ENCODE measurements at regions of chr1 and their contacts with region 1.

Region 1: GRCh38 chr1:77978969-77979876 is at the start of gene FUBP1:
- DNase-seq: peak; percentile 99
- H3K4me3 Mint-ChIP-seq: no peak within 1 kb of the TSS
- H3K27ac Mint-ChIP-seq: no peak within 1 kb of the TSS
- H3K4me1 Mint-ChIP-seq: peaks cover 23% of the 10 kb centered on the region
- H3K27me3 Mint-ChIP-seq: no peaks in the 10 kb centered on the region
- CTCF ChIP-seq: peak; percentile 68
- total RNA-seq, gene FUBP1: 156 and 169 TPM in 2 replicates

Region 2: GRCh38 chr1:77759071-77760028 is 219.9 kb before region 1 on chr1 and contains the start of gene USP33:
- CTCF ChIA-PET with region 1: no interaction called
- POLR2A ChIA-PET with region 1: interaction called, 29 read pairs
- intact Hi-C with region 1: loop called (anchors 5 kb)
- DNase-seq: peak; percentile 84
- H3K4me3 Mint-ChIP-seq: peak within 1 kb of the TSS; percentile 91
- H3K27ac Mint-ChIP-seq: peak within 1 kb of the TSS; percentile 91
- H3K4me1 Mint-ChIP-seq: peaks cover 31% of the 10 kb centered on the region
- H3K27me3 Mint-ChIP-seq: no peaks in the 10 kb centered on the region
- CTCF ChIP-seq: no peak
- total RNA-seq, gene USP33: 39.7 and 45.1 TPM in 2 replicates

Region 3: DNA sequence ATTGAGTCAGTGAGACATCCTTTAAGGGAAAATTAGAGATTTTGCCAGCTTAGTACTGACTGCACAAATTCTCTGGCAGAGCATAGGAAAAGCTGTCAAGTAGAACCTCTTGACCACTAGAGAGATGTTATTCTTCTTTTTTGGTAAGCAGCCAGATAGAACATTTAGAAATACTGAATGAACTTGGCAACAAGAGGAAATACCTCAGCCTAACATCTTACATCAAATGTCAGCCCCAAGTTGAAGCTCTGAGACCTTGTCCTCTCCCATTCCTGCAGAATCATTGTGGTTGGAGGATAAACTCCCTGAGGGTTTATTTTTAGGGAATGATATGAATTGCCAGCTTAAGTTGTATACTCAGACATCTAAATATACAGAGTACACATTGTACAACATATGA is 146.3 kb before region 1 on chr1:
- CTCF ChIA-PET with region 1: no interaction called
- POLR2A ChIA-PET with region 1: interaction called, 10 read pairs
- intact Hi-C with region 1: loop called (anchors 10 kb)
- DNase-seq: peak; percentile 92
- H3K4me3 Mint-ChIP-seq: peak overlapping the region; percentile 6
- H3K27ac Mint-ChIP-seq: peak overlapping the region; percentile 96
- H3K4me1 Mint-ChIP-seq: peaks cover 46% of the 10 kb centered on the region
- H3K27me3 Mint-ChIP-seq: no peaks in the 10 kb centered on the region
- CTCF ChIP-seq: no peak

Region 4: DNA sequence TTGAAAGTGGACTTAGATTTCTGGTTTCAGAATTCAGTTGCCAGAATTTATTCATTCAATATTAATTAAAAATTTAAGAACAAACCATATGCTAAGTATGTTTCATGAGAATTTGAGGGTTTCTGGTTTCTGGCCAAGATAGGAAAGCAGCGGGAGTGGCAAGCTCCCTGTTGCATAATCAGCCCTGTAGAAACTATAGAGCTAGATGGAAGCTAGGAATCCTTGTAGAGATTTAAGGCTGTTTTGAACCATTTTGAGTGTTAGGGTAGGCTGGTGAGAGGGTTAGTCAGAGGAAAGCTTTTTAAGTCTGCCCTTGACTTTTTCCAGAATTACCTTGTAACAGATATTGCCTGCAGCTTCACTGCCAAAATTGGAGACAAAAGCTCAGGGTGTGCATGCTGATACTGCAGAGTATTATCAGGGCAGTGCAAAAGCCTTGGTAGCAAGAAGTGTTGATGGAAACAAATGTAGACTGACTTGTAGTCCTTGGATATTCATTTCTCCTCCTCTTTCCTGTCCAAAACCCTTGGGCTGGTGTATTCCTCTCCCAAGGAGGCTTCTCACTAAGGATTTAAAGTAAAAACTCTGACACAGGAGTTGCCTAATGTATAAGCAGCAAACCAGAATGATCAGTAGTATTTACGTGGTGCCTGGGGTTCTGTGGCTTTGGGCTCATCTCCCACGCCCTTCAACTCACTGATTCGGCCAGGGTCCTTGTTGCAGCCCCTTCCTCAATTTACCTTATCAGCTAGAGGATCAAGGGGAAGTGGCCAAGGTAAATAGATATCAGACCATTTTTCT is 54.0 kb after region 1 on chr1:
- CTCF ChIA-PET with region 1: interaction called, 9 read pairs
- POLR2A ChIA-PET with region 1: interaction called, 19 read pairs
- intact Hi-C with region 1: no loop called
- DNase-seq: peak; percentile 73
- H3K4me3 Mint-ChIP-seq: no peak overlapping the region
- H3K27ac Mint-ChIP-seq: no peak overlapping the region
- H3K4me1 Mint-ChIP-seq: peaks cover 19% of the 10 kb centered on the region
- H3K27me3 Mint-ChIP-seq: no peaks in the 10 kb centered on the region
- CTCF ChIP-seq: no peak

Region 5: DNA sequence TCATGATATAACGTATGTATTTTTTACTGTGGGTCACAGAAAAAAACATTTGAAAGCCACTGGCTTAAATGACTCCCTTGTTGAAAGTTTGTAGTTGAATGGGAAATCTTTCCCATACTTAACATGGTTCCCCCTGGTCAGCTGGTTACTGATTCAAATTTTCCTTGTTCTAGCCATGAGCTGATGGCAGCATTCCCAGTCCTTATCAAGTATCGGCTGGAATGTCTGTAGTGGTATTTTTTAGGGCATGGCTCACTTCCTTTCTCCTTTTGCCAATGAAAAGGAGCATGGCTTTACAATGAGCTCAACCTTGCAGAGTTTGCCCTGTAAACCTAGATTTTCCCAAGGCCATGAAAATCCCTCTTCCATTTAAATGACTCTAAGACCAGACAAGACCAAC is 122.3 kb after region 1 on chr1:
- CTCF ChIA-PET with region 1: interaction called, 5 read pairs
- POLR2A ChIA-PET with region 1: interaction called, 19 read pairs
- intact Hi-C with region 1: no loop called
- DNase-seq: peak; percentile 45
- H3K4me3 Mint-ChIP-seq: no peak overlapping the region
- H3K27ac Mint-ChIP-seq: peak overlapping the region; percentile 35
- H3K4me1 Mint-ChIP-seq: peaks cover 14% of the 10 kb centered on the region
- H3K27me3 Mint-ChIP-seq: no peaks in the 10 kb centered on the region
- CTCF ChIP-seq: no peak